Heart left ventricle (tissue), 16 donors: ENCODE measurements at regions of chr1 and their contacts with region 1.

Region 1: DNA sequence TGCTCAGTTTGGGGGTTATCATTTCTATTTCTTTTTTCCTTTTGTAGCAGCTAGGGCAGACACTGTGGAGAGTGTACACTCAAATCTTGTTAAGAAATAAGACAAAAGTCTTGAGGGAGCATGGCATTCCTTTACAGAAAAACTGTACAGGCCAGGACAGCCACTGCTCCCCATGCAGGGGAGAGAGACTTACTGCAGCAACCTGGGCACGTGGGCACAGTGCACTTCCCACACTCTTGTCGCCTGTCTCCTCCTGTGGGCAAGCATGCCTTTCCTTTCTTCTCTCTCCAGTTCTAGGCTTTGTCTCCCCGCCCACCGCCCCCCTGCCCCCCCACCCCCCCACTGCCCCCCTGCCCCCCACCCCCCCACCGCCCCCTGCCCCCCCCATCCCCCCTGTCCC is 51.9 kb downstream of the PHC2 start:
- DNase-seq: no peak
- ATAC-seq: peak in 2 of 4 donors; percentile 56 to 60
- H3K4me3 ChIP-seq: no peak overlapping the region
- H3K27ac ChIP-seq: peak overlapping the region in 9 of 12 donors; percentile 20 to 72 (median 56)
- H3K4me1 ChIP-seq: peaks cover 0 to 74% (median 48%) of the 10 kb centered on the region in 12 donors
- H3K27me3 ChIP-seq: no peaks in the 10 kb centered on the region
- CTCF ChIP-seq: peak in 2 of 12 donors; percentile 12
- POLR2A ChIP-seq: no peak

Region 2: GRCh38 chr1:33111970-33112369 is 267.0 kb before region 1 on chr1:
- intact Hi-C with region 1: loop called in 1 of 10 experiments (anchors 10 kb)
- DNase-seq: no peak
- ATAC-seq: no peak
- H3K4me3 ChIP-seq: no peak overlapping the region
- H3K27ac ChIP-seq: no peak overlapping the region
- H3K4me1 ChIP-seq: no peaks in the 10 kb centered on the region
- H3K27me3 ChIP-seq: no peaks in the 10 kb centered on the region
- CTCF ChIP-seq: peak in 6 of 12 donors; percentile 11 to 37 (median 20)
- POLR2A ChIP-seq: no peak

Region 3: GRCh38 chr1:33430692-33431593 is 52.0 kb after region 1 on chr1 and contains the start of gene PHC2:
- intact Hi-C with region 1: loop called in 1 of 10 experiments (anchors 5 kb)
- DNase-seq: peak; percentile 97 to 99 (median 98)
- ATAC-seq: peak; percentile 96 to 97 (median 97)
- H3K4me3 ChIP-seq: peak within 1 kb of the TSS; percentile 64 to 93 (median 79)
- H3K27ac ChIP-seq: peak within 1 kb of the TSS; percentile 74 to 90 (median 82)
- H3K4me1 ChIP-seq: peaks cover 0 to 70% (median 26%) of the 10 kb centered on the region in 12 donors
- H3K27me3 ChIP-seq: peaks cover 0 to 4% (median 0%) of the 10 kb centered on the region in 9 donors
- CTCF ChIP-seq: peak in 9 of 12 donors; percentile 16 to 70 (median 41)
- POLR2A ChIP-seq: peak; percentile 19 to 56
- total RNA-seq, gene PHC2: 86.5 to 194 (median 99.4) TPM

Region 4: DNA sequence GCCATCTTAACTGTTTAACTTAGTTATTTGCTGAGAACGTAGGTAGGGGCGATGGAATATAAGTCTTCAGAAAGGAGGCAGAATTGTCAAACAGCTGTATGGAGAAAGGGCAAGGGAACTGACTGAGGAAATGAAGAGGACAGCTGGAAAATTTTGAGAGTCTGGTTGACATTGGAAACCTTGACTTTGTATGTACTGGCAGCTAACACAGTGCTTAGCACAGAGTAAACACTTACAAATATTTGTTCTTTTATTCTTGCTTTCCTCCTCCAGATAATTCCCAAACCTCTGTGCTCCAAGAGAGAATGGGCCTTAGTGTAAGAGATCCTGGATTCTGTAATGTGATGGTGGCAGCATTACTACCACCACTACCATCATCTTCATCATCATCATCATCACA is 184.7 kb after region 1 on chr1:
- intact Hi-C with region 1: no loop called
- DNase-seq: no peak
- ATAC-seq: peak in 2 of 4 donors; percentile 59 to 84
- H3K4me3 ChIP-seq: no peak overlapping the region
- H3K27ac ChIP-seq: peak overlapping the region in 1 of 12 donors; percentile 24
- H3K4me1 ChIP-seq: peaks cover 0 to 14% (median 0%) of the 10 kb centered on the region in 12 donors
- H3K27me3 ChIP-seq: no peaks in the 10 kb centered on the region
- CTCF ChIP-seq: no peak
- POLR2A ChIP-seq: no peak

Region 5: GRCh38 chr1:33616773-33617172 is 237.8 kb after region 1 on chr1:
- intact Hi-C with region 1: loop called in 2 of 10 experiments (anchors 5 to 10 kb)
- DNase-seq: no peak
- ATAC-seq: no peak
- H3K4me3 ChIP-seq: no peak overlapping the region
- H3K27ac ChIP-seq: no peak overlapping the region
- H3K4me1 ChIP-seq: peaks cover 0 to 6% (median 0%) of the 10 kb centered on the region in 12 donors
- H3K27me3 ChIP-seq: peaks cover 0 to 13% (median 0%) of the 10 kb centered on the region in 9 donors
- CTCF ChIP-seq: no peak
- POLR2A ChIP-seq: no peak